Aorta (tissue), 5 donors: ENCODE measurements at regions of chr13 and their contacts with region 1.

Region 1: GRCh38 chr13:25329706-25330105 is 28.3 kb downstream of the NUP58 start:
- DNase-seq: no peak
- ATAC-seq: no peak
- H3K4me3 ChIP-seq: no peak overlapping the region
- H3K27ac ChIP-seq: no peak overlapping the region
- H3K4me1 ChIP-seq: no peaks in the 10 kb centered on the region
- H3K27me3 ChIP-seq: no peaks in the 10 kb centered on the region

Region 2: GRCh38 chr13:25267715-25268114 is 62.0 kb before region 1 on chr13:
- intact Hi-C with region 1: loop called in 1 of 2 experiments (anchors 10 kb)
- DNase-seq: no peak
- ATAC-seq: no peak
- H3K4me3 ChIP-seq: no peak overlapping the region
- H3K27ac ChIP-seq: no peak overlapping the region
- H3K4me1 ChIP-seq: no peaks in the 10 kb centered on the region
- H3K27me3 ChIP-seq: no peaks in the 10 kb centered on the region